Calu3 (cell line): ENCODE measurements at regions of chr1 and their contacts with region 1.

Region 1: GRCh38 chr1:167721617-167722151 is at the start of gene MPZL1:
- DNase-seq: peak; percentile 98
- H3K4me3 Mint-ChIP-seq: peak within 1 kb of the TSS; percentile 85
- H3K27ac Mint-ChIP-seq: peak within 1 kb of the TSS; percentile 88
- H3K4me1 Mint-ChIP-seq: peaks cover 33% of the 10 kb centered on the region
- H3K27me3 Mint-ChIP-seq: no peaks in the 10 kb centered on the region
- CTCF ChIP-seq: no peak
- total RNA-seq, gene MPZL1: 129 and 139 TPM in 2 replicates

Region 2: DNA sequence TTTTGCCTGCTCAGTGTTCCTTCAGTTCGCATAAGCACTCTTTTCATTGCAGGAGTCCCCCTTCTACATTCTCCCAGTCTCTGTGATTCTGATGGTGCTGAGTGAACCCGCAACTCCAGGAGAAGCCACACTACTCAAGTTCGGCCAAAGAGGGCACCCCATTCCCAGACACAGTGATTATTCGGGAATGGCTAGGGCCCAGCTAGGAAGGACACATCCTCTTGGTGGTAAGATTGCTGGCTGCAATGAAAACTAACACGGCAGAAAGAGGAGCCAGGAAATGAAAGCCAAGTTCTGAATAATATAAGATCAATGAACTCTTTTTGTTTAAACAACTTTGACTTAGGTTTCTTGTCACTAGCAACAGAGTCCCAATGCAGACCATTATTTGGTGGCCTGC is 183.0 kb before region 1 on chr1:
- CTCF ChIA-PET with region 1: no interaction called
- intact Hi-C with region 1: no loop called
- DNase-seq: no peak
- H3K4me3 Mint-ChIP-seq: no peak overlapping the region
- H3K27ac Mint-ChIP-seq: no peak overlapping the region
- H3K4me1 Mint-ChIP-seq: no peaks in the 10 kb centered on the region
- H3K27me3 Mint-ChIP-seq: no peaks in the 10 kb centered on the region
- CTCF ChIP-seq: no peak

Region 3: GRCh38 chr1:167752219-167752985 is 30.7 kb after region 1 on chr1:
- CTCF ChIA-PET with region 1: interaction called, 9 read pairs
- intact Hi-C with region 1: loop called (anchors 2 kb)
- DNase-seq: no peak
- H3K4me3 Mint-ChIP-seq: peak overlapping the region; percentile 2
- H3K27ac Mint-ChIP-seq: peak overlapping the region; percentile 53
- H3K4me1 Mint-ChIP-seq: peaks cover 42% of the 10 kb centered on the region
- H3K27me3 Mint-ChIP-seq: no peaks in the 10 kb centered on the region
- CTCF ChIP-seq: no peak

Region 4: GRCh38 chr1:167803358-167804207 is 81.9 kb after region 1 on chr1:
- CTCF ChIA-PET with region 1: interaction called, 3 read pairs
- intact Hi-C with region 1: loop called (anchors 1 kb)
- DNase-seq: peak; percentile 95
- H3K4me3 Mint-ChIP-seq: peak overlapping the region; percentile 20
- H3K27ac Mint-ChIP-seq: peak overlapping the region; percentile 3
- H3K4me1 Mint-ChIP-seq: peaks cover 24% of the 10 kb centered on the region
- H3K27me3 Mint-ChIP-seq: no peaks in the 10 kb centered on the region
- CTCF ChIP-seq: peak; percentile 95

Region 5: DNA sequence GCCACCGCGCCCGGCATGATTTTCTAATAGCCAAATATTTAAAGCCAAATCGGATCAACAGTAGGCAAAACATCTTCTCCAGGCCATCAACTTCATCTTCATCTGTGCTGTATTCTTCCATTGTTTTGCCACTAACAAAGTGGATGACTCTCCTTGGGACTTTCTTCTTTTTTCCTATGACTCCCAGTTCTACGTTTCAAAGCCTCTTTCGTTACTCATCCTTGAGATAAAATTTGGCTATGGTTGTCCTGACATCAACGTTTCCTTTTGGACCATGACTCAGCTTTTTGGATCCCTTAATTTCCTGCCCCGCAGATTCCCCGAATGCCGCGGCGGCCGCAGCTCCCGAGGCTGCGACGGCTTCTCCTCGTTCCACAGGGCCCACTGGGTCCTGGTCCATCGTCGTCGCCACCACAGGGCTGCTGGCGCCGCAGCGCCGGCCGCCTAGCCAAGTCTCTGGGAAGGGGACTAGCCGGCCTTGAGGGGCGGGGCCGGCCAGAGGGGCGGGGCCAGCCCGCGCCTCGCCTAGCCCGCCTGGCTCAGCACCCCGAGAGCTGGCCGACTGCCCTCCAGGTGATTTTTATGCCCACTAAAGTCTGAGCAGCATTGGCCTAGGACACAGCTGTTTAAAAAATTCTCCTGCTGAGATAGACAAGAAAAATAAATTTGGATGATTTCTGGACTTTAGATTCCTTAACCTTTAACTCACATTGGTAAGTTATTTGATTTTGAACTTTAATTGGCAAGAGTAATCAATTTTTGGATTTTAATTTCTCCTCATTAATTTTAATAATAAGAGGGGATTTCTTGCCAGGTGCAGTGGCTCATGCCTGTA is 98.4 kb after region 1 on chr1:
- CTCF ChIA-PET with region 1: interaction called, 3 read pairs
- intact Hi-C with region 1: loop called (anchors 5 kb)
- DNase-seq: peak; percentile 85
- H3K4me3 Mint-ChIP-seq: peak overlapping the region; percentile 85
- H3K27ac Mint-ChIP-seq: peak overlapping the region; percentile 95
- H3K4me1 Mint-ChIP-seq: peaks cover 48% of the 10 kb centered on the region
- H3K27me3 Mint-ChIP-seq: no peaks in the 10 kb centered on the region
- CTCF ChIP-seq: no peak

Region 6: GRCh38 chr1:167936068-167936929 is 214.6 kb after region 1 on chr1 and contains the start of gene DCAF6:
- CTCF ChIA-PET with region 1: interaction called, 14 read pairs
- intact Hi-C with region 1: loop called (anchors 5 kb)
- DNase-seq: peak; percentile 98
- H3K4me3 Mint-ChIP-seq: peak within 1 kb of the TSS; percentile 91
- H3K27ac Mint-ChIP-seq: peak within 1 kb of the TSS; percentile 97
- H3K4me1 Mint-ChIP-seq: peaks cover 26% of the 10 kb centered on the region
- H3K27me3 Mint-ChIP-seq: no peaks in the 10 kb centered on the region
- CTCF ChIP-seq: no peak
- total RNA-seq, gene DCAF6: 64.0 and 69.1 TPM in 2 replicates

Region 7: DNA sequence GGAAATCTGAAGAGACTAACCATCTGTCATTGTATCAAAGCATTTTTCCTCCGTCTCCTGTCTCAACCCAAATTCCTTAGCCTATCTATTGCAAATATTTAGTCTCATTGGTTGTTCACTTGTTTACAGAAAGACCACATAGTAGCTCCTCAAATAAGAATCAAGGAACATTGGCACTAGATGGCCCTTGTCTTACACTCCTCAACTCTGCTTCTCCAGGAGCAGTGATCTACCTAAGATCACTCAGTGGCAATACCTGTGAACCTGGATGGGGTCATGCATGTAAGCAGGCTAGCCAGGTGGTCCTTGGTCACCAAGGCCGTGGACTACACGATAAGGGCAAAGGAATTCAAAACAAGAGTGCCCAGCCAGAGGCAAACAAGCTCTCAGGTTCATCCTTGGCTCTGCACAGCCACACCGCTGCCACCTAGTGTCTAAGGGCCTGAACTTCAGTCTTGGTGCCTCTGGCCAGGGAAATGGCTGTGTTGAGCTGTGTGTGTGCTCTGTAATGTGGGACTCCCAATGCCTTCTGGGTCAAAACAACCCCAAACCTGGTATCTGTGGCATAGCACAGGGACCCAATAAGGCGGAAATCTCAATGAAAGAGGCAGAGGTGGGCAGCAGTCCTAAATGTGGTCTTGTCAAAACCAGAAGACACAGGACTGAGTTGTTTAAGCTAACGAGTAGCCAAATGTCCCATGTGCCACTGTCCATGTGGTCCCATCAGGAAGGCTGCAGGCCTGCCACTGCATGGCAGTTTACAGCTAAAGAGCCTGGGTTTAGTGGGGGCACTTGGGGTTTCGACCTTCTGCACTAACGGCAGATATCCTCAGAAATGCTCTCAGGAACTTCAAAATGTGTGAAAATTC is 360.6 kb after region 1 on chr1:
- CTCF ChIA-PET with region 1: interaction called, 16 read pairs
- intact Hi-C with region 1: loop called (anchors 2 kb)
- DNase-seq: peak; percentile 87
- H3K4me3 Mint-ChIP-seq: no peak overlapping the region
- H3K27ac Mint-ChIP-seq: no peak overlapping the region
- H3K4me1 Mint-ChIP-seq: no peaks in the 10 kb centered on the region
- H3K27me3 Mint-ChIP-seq: no peaks in the 10 kb centered on the region
- CTCF ChIP-seq: peak; percentile 96